Heart left ventricle (tissue), 16 donors: ENCODE measurements at regions of chr14 and their contacts with region 1.

Region 1: GRCh38 chr14:20343092-20343861 is at the start of gene PARP2:
- DNase-seq: peak; percentile 97 to 99 (median 98)
- ATAC-seq: peak; percentile 98 to 99 (median 98)
- H3K4me3 ChIP-seq: peak within 1 kb of the TSS; percentile 52 to 88 (median 70)
- H3K27ac ChIP-seq: peak within 1 kb of the TSS; percentile 73 to 98 (median 85)
- H3K4me1 ChIP-seq: peaks cover 0 to 13% (median 6%) of the 10 kb centered on the region in 12 donors
- H3K27me3 ChIP-seq: no peaks in the 10 kb centered on the region
- CTCF ChIP-seq: peak in 1 of 12 donors; percentile 11
- POLR2A ChIP-seq: peak in 1 of 2 donors; percentile 85
- total RNA-seq, gene PARP2: 6.8 to 20.0 (median 16.2) TPM

Region 2: DNA sequence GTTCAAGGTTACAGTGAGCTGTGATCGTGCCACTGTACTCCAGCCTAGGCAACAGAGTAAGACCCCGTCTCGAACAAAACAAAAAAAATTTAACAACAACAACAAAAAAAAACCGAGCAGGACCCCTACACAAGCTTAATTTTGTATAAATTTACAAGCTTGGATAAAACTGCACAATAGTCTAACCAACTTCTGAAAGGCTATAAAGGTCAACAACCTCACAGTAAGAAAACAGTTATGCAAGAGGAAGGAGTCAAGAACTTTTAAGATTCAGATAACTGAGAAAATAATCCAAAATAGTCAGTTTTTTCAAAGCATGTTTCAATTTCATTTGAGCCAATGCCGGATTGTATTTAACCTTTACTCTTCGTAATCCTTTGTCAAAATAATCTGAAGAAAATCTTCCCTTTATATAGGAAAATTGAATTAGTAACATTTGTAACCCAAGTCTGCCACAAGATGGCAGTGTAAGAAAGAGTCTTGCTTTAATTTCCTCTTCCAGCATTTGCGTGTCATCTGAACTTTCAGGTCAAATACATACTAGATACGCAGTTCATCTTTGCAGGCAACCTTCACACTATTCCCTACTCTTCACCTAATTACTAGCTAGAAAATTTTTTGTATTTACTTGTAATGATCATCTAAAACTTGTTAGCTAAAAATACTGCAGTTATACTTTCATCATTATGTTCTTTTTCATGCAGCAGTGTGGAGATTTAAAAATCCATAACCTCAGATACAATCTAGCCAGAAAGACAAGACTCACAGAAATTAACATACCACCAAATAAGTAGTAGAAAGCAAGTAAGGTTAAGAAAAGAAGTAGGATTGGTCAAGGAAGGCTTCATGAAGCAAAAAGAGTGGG is 16.0 kb before region 1 on chr14:
- intact Hi-C with region 1: loop called in 3 of 10 experiments (anchors 1 to 2 kb)
- DNase-seq: peak in 1 of 5 donors; percentile 33
- ATAC-seq: peak in 2 of 4 donors; percentile 48 to 58
- H3K4me3 ChIP-seq: no peak overlapping the region
- H3K27ac ChIP-seq: peak overlapping the region in 3 of 12 donors; percentile 6 to 51 (median 40)
- H3K4me1 ChIP-seq: peaks cover 0 to 29% (median 13%) of the 10 kb centered on the region in 12 donors
- H3K27me3 ChIP-seq: no peaks in the 10 kb centered on the region
- CTCF ChIP-seq: peak; percentile 67 to 88 (median 80)
- POLR2A ChIP-seq: no peak

Region 3: DNA sequence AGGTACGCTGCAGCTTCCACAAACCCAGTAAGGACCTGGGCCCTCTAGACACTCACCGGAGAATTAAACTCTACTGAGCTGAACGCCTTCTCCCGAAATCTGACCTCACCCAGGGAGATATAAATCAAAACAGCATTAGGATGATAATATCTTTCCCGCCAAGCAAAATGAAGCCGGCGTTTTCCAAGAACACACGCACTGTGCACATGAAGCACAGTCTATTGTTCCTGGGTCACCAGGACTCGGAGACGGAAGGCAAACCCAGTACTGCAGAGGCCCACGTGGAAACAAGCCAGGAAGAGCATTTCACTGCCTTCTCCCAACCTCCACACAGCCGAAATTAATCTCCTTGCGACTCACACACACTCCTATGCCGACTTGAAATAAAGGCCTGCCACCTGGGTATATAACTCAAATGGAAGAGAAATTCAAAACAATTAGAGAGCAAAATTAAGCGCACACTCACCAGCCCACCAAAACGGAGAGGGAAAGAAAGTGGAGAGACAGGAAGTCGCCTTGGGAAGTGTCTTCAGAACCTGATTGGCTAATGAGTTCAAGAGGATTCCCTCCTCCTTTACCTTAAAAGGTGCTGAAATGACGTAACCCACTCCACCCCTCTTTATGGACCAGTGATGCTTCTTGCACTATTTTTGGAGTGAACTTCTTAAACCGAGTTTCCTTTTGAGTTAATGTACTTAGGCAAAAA is 10.3 kb before region 1 on chr14 and contains the start of gene CCNB1IP1:
- intact Hi-C with region 1: loop called in 3 of 10 experiments (anchors 1 to 2 kb)
- DNase-seq: peak in 4 of 5 donors; percentile 57 to 78 (median 66)
- ATAC-seq: peak; percentile 98 to 99 (median 99)
- H3K4me3 ChIP-seq: peak within 1 kb of the TSS; percentile 17 to 75 (median 68)
- H3K27ac ChIP-seq: peak within 1 kb of the TSS; percentile 59 to 94 (median 88)
- H3K4me1 ChIP-seq: peaks cover 0 to 26% (median 15%) of the 10 kb centered on the region in 12 donors
- H3K27me3 ChIP-seq: no peaks in the 10 kb centered on the region
- CTCF ChIP-seq: no peak
- POLR2A ChIP-seq: no peak
- total RNA-seq, gene CCNB1IP1: 24.5 to 85.6 (median 53.0) TPM

Region 4: DNA sequence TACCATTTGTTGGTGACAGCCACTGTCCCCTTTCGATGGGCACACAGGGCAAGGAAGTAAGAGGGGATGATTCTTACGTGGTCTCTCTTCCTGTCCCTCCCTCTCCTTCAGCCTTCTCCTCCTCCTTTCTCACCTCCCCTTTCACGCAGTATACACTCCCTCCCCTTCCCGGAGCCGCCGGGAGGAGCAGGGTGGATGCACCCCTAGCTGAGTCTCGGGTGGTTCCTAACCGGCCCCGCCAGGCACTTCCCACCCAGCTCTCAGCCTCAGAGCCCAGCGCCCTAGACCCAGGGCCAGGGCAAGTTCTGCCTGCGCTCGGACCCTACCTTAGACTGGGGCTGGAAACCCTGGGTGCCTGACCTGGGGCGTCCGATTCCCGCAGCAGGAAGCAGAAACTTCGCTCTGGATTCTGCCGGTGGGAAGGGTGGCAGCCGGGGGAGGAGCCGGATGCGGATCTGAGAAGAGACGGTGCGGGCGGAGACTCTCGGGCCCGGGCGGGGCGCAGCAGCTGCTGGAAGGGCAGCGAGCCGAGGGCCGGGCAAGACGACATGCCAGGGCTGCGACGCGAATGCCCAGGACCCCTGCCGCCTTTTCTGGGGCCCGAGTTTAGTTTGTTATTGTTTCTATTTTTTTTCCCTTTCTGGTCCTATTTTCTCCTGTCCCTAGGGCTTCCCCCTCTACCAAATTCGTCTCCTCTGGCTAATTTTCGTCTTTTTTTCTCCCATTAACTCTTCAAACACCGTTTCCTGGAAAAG is 69.9 kb after region 1 on chr14 and contains the start of gene TEP1:
- intact Hi-C with region 1: loop called in 2 of 10 experiments (anchors 2 to 5 kb)
- DNase-seq: peak; percentile 90 to 94 (median 94)
- ATAC-seq: peak; percentile 92 to 98 (median 97)
- H3K4me3 ChIP-seq: peak within 1 kb of the TSS; percentile 58 to 98 (median 80)
- H3K27ac ChIP-seq: peak within 1 kb of the TSS; percentile 79 to 98 (median 94)
- H3K4me1 ChIP-seq: peaks cover 0 to 41% (median 9%) of the 10 kb centered on the region in 12 donors
- H3K27me3 ChIP-seq: no peaks in the 10 kb centered on the region
- CTCF ChIP-seq: peak in 1 of 12 donors; percentile 28
- POLR2A ChIP-seq: peak in 1 of 2 donors; percentile 83
- total RNA-seq, gene TEP1: 4.1 to 31.3 (median 9.8) TPM

Region 5: DNA sequence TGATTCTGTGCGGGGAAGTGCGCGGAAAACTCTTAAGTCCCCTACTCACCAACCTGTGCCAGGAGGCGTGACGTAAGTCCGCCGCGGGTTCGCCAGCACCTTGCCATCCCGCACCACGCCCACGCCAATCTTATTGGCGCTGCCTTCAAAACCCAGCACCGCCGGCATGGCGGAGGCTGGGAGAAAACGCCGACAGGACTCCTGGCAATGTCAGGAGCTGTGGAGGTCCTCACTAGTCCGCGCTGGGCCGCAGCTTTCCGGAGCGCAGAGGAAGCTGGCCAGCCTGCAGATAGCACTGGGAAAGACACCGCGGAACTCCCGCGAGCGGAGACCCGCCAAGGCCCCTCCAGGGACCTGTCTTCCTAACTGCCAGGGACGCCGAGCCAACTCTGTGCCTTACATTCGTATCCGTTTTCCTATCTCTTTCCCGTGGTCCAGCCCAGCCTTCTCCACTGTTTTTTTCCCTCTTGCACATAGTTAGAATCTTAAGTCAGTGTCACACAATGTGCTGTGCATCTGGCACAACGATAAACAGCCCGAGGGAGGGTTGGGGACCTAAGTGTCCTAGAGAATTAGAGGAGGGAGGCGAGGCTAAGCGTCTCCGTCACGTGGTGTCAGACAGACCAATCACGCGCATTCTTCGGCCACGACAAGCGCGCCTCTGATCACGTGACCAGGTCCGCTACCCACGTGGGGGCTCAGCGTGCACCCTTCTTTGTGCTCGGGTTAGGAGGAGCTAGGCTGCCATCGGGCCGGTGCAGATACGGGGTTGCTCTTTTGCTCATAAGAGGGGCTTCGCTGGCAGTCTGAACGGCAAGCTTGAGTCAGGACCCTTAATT is 111.5 kb after region 1 on chr14 and contains the starts of genes APEX1 and OSGEP:
- intact Hi-C with region 1: loop called in 7 of 10 experiments (anchors 2 to 10 kb)
- DNase-seq: peak; percentile 98 to 99 (median 99)
- ATAC-seq: peak; percentile 95 to 97 (median 96)
- H3K4me3 ChIP-seq: peak within 1 kb of the TSS; percentile 71 to 92 (median 81)
- H3K27ac ChIP-seq: peak within 1 kb of the TSS; percentile 88 to 98 (median 93)
- H3K4me1 ChIP-seq: peaks cover 0 to 53% (median 26%) of the 10 kb centered on the region in 12 donors
- H3K27me3 ChIP-seq: no peaks in the 10 kb centered on the region
- CTCF ChIP-seq: peak in 1 of 12 donors; percentile 6
- POLR2A ChIP-seq: peak in 1 of 2 donors; percentile 89
- total RNA-seq, gene APEX1: 60.4 to 92.6 (median 76.4) TPM
- total RNA-seq, gene OSGEP: 16.1 to 40.9 (median 18.5) TPM

Region 6: GRCh38 chr14:20461274-20462001 is 118.2 kb after region 1 on chr14 and contains the start of gene PIP4P1:
- intact Hi-C with region 1: loop called in 7 of 10 experiments (anchors 2 to 10 kb)
- DNase-seq: peak; percentile 98 to 100 (median 99)
- ATAC-seq: peak; percentile 97 to 99 (median 98)
- H3K4me3 ChIP-seq: peak within 1 kb of the TSS; percentile 66 to 99 (median 92)
- H3K27ac ChIP-seq: peak within 1 kb of the TSS; percentile 57 to 97 (median 92)
- H3K4me1 ChIP-seq: peaks cover 0 to 52% (median 17%) of the 10 kb centered on the region in 12 donors
- H3K27me3 ChIP-seq: no peaks in the 10 kb centered on the region
- CTCF ChIP-seq: no peak
- POLR2A ChIP-seq: peak in 1 of 2 donors; percentile 88
- total RNA-seq, gene PIP4P1: 12.3 to 25.3 (median 18.0) TPM